ENCODE measurements at regions of chr12 and their contacts with region 1.

Region 1: GRCh38 chr12:77679686-77680085 is 151.0 kb upstream of the NAV3 start:
- DNase-seq: no peak
- ATAC-seq: no peak
- H3K4me3 ChIP-seq: no peak overlapping the region
- H3K27ac ChIP-seq: no peak overlapping the region
- H3K4me1 ChIP-seq: no peaks in the 10 kb centered on the region
- H3K27me3 ChIP-seq: no peaks in the 10 kb centered on the region
- CTCF ChIP-seq: no peak
- POLR2A ChIP-seq: no peak
- RAD21 ChIP-seq: no peak

Region 2: GRCh38 chr12:77102691-77103090 is 577.0 kb before region 1 on chr12:
- CTCF ChIA-PET with region 1: no interaction called
- POLR2A ChIA-PET with region 1: no interaction called
- dilution Hi-C with region 1: no loop called
- in situ Hi-C with region 1: no loop called
- intact Hi-C with region 1: no loop called
- DNase-seq: peak; percentile 79
- ATAC-seq: peak; percentile 87
- H3K4me3 ChIP-seq: no peak overlapping the region
- H3K27ac ChIP-seq: no peak overlapping the region
- H3K4me1 ChIP-seq: peaks cover 5% of the 10 kb centered on the region; the same call in 1 of the 2 replicates
- H3K27me3 ChIP-seq: no peaks in the 10 kb centered on the region
- CTCF ChIP-seq: no peak
- POLR2A ChIP-seq: no peak
- RAD21 ChIP-seq: no peak

Region 3: DNA sequence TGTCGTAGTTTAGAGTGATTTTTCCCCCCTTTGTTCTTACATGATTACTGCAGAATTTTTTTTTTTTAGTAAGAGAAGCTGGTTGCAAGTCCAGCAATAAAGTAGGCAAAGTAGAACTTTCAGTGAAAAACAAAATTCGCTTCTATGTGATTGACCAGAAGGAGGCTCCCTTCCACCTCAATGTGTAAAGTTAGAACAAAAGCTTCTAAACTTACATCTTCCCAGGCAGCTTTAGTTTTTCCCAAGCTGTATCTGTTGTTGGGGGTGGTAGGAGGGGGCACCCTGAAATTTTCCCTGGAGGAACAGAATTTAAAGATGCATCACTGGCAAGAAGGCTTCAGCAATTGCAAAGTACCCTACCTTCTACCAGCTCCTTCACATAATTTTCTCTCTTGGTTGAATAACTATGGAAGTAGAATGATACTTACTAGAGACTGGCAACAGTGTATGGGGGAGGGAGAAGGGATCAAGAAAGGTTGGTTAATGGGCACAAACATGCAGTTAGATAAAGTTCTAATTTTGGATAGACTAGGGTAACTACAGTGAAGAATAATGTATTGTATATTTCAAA is 527.0 kb before region 1 on chr12:
- CTCF ChIA-PET with region 1: interaction called, 11 read pairs
- POLR2A ChIA-PET with region 1: no interaction called
- dilution Hi-C with region 1: loop called (anchors 25 kb)
- in situ Hi-C with region 1: loop called (anchors 5 kb)
- intact Hi-C with region 1: no loop called
- DNase-seq: peak; percentile 56
- ATAC-seq: peak; percentile 54; the same call in 1 of the 2 replicates
- H3K4me3 ChIP-seq: no peak overlapping the region
- H3K27ac ChIP-seq: no peak overlapping the region
- H3K4me1 ChIP-seq: no peaks in the 10 kb centered on the region
- H3K27me3 ChIP-seq: no peaks in the 10 kb centered on the region
- CTCF ChIP-seq: peak; percentile 65
- POLR2A ChIP-seq: no peak
- RAD21 ChIP-seq: peak; percentile 76